MCF 10A (cell line): ENCODE measurements at regions of chr9 and their contacts with region 1.

Region 1: DNA sequence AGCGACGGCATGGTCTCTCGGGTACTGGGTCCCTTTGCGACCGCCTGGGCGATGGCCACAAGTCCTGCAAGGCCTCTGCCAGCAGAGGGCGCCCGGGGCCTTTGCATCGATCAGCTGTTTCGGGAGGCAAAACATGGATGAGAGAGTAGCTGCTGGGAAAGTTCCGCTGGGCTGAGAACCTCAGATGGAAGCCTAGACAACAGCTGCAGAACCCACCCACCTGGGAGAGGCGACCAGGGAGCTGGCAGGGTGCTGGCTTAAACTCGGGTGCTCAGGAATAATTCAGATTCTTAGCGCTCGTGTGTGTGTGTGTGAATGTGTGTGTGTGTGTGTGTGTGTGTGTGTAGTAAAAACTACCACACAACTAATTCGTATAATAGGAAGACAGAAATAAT is 50.0 kb downstream of the TRIM32 start:
- DNase-seq: peak; percentile 85
- H3K4me3 Mint-ChIP-seq: peak overlapping the region; percentile 2
- H3K27ac Mint-ChIP-seq: peak overlapping the region; percentile 0
- H3K4me1 Mint-ChIP-seq: peaks cover 9% of the 10 kb centered on the region
- H3K27me3 Mint-ChIP-seq: no peaks in the 10 kb centered on the region
- CTCF ChIP-seq: peak; percentile 96

Region 2: DNA sequence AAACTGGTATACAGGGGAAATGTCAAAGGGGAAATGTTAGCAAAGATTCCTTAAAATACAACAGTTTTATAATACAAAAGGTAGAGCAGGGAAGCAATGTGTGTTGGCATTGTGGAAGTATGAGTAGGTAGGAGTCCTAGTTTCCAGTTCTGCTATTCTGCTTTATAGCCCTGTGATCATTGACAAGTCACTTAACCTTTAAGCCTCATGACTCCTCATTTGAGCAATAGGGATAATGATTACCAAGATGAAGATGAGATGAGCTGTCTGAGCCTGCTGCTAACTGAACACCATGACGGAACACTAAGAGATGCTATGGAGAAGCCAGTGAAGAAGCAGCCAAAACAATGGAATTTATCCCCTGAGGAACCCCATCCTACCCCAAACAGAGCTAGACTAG is 331.8 kb before region 1 on chr9:
- CTCF ChIA-PET with region 1: no interaction called
- POLR2A ChIA-PET with region 1: no interaction called
- intact Hi-C with region 1: no loop called
- DNase-seq: no peak
- H3K4me3 Mint-ChIP-seq: no peak overlapping the region
- H3K27ac Mint-ChIP-seq: no peak overlapping the region
- H3K4me1 Mint-ChIP-seq: no peaks in the 10 kb centered on the region
- H3K27me3 Mint-ChIP-seq: no peaks in the 10 kb centered on the region
- CTCF ChIP-seq: no peak

Region 3: GRCh38 chr9:116724123-116724522 is 13.0 kb before region 1 on chr9:
- CTCF ChIA-PET with region 1: interaction called, 46 read pairs
- POLR2A ChIA-PET with region 1: no interaction called
- intact Hi-C with region 1: no loop called
- DNase-seq: no peak
- H3K4me3 Mint-ChIP-seq: no peak overlapping the region
- H3K27ac Mint-ChIP-seq: no peak overlapping the region
- H3K4me1 Mint-ChIP-seq: no peaks in the 10 kb centered on the region
- H3K27me3 Mint-ChIP-seq: peaks cover 4% of the 10 kb centered on the region
- CTCF ChIP-seq: no peak

Region 4: GRCh38 chr9:116757030-116757429 is 19.9 kb after region 1 on chr9:
- CTCF ChIA-PET with region 1: interaction called, 12 read pairs
- POLR2A ChIA-PET with region 1: no interaction called
- intact Hi-C with region 1: no loop called
- DNase-seq: peak; percentile 7
- H3K4me3 Mint-ChIP-seq: no peak overlapping the region
- H3K27ac Mint-ChIP-seq: no peak overlapping the region
- H3K4me1 Mint-ChIP-seq: peaks cover 9% of the 10 kb centered on the region
- H3K27me3 Mint-ChIP-seq: no peaks in the 10 kb centered on the region
- CTCF ChIP-seq: no peak

Region 5: GRCh38 chr9:116795821-116796220 is 58.7 kb after region 1 on chr9:
- CTCF ChIA-PET with region 1: interaction called, 10 read pairs
- POLR2A ChIA-PET with region 1: no interaction called
- intact Hi-C with region 1: no loop called
- DNase-seq: no peak
- H3K4me3 Mint-ChIP-seq: no peak overlapping the region
- H3K27ac Mint-ChIP-seq: no peak overlapping the region
- H3K4me1 Mint-ChIP-seq: peaks cover 2% of the 10 kb centered on the region
- H3K27me3 Mint-ChIP-seq: no peaks in the 10 kb centered on the region
- CTCF ChIP-seq: no peak

Region 6: DNA sequence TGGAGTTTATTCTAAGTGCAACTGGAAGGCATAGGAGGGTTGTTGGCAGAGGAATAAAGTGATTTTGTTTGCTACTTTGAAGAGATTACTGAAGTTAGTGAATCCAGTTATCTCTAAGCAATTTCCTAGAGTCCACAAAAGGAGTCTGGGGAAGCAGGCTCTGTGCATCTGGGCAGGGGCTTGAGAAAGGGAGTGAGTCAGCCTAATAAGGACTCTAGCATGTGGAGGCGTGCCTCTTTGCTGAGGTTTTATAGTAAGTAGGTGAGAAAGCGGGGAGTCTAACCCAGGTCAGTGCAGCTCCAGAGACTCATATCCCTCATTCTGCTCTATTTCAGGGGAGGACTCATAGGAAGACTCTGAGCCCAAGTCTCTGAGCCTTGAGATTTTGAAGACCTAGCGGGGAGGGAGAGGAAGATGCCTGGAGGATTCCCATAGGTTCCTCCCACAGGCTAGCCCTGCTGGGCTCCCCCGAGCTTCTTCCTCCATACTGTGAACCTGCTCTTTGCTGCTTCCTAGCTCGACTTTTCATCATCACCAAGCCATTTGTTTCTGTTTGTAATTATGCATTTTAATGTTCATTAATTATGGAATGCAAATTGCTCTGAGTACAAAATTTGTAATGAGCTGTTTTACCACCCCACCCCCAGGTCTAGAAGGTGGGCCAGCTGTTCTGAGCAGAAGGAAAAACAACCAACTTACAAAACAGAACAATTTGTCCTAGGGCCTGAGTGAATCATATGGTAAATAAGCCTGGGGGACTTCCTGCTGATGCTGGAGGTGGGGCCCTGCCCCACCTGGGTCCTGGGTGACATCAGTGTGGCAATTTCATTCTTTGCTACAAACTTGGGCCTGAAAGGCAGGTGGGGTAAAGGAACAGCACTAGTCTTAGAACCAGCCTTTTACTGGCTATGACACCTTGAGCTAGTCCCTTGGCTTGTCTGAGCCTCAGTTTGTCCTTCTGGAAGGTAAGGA is 100.2 kb after region 1 on chr9:
- CTCF ChIA-PET with region 1: interaction called, 38 read pairs
- POLR2A ChIA-PET with region 1: interaction called, 12 read pairs
- intact Hi-C with region 1: no loop called
- DNase-seq: peak; percentile 91
- H3K4me3 Mint-ChIP-seq: peak overlapping the region; percentile 75
- H3K27ac Mint-ChIP-seq: peak overlapping the region; percentile 98
- H3K4me1 Mint-ChIP-seq: peaks cover 27% of the 10 kb centered on the region
- H3K27me3 Mint-ChIP-seq: no peaks in the 10 kb centered on the region
- CTCF ChIP-seq: no peak

Region 7: DNA sequence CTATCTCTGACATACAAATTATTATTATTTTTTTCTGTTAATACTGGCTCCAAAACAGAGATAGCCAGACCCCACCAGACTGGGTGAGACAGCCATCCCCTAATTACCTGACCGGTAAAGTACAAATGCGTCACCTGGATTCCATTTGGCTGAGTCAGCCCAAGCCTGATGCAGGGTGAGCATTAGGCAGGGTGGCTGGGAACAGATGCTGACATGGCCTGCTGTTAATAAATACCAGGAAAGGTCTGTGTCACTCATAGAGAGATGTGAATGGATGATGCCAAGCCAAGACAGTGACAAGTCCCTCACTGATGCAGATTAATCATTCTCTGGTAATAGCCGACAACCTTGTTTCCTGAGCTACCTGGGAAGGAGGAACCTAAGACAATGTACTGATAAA is 133.4 kb after region 1 on chr9:
- CTCF ChIA-PET with region 1: interaction called, 483 read pairs
- POLR2A ChIA-PET with region 1: no interaction called
- intact Hi-C with region 1: no loop called
- DNase-seq: peak; percentile 71
- H3K4me3 Mint-ChIP-seq: no peak overlapping the region
- H3K27ac Mint-ChIP-seq: peak overlapping the region; percentile 41
- H3K4me1 Mint-ChIP-seq: peaks cover 7% of the 10 kb centered on the region
- H3K27me3 Mint-ChIP-seq: no peaks in the 10 kb centered on the region
- CTCF ChIP-seq: no peak

Region 8: DNA sequence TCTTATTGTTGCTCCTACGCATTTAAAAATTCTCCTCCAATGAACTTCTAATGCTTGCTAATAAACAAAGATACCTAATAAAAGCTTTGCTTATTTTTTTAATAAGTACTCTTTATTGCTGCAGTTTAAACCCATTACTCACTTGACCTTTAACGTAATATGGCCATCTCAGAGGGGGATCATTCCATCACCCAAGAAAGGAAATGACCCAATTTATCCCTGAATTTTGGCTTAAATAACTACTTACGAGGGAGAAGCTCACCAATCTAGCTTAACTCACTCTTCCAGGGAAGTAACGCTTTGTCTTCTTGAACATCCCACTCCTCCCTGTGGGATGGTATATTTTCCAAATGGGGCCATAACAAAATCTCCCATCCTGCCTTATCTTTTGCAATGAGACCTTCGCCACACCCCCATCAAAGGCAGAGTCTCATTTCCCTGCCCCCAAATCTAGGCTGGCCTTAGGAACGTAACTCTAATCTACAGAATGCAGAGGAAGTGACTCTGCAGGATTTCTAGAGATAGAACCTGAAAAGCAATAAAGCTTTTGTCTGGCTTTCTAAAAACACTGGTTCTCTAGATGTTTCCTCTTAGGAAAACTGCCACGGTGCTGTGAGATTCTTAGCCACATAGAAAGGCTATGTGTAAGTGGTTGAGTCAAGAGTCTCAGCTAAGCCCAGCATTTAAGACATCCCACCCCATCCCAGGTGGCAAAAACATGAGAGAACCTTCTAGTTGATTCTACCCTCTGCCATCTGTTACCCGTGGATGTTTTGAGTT is 367.8 kb after region 1 on chr9:
- CTCF ChIA-PET with region 1: interaction called, 10 read pairs
- POLR2A ChIA-PET with region 1: no interaction called
- intact Hi-C with region 1: no loop called
- DNase-seq: no peak
- H3K4me3 Mint-ChIP-seq: no peak overlapping the region
- H3K27ac Mint-ChIP-seq: no peak overlapping the region
- H3K4me1 Mint-ChIP-seq: peaks cover 5% of the 10 kb centered on the region
- H3K27me3 Mint-ChIP-seq: no peaks in the 10 kb centered on the region
- CTCF ChIP-seq: no peak

Region 9: DNA sequence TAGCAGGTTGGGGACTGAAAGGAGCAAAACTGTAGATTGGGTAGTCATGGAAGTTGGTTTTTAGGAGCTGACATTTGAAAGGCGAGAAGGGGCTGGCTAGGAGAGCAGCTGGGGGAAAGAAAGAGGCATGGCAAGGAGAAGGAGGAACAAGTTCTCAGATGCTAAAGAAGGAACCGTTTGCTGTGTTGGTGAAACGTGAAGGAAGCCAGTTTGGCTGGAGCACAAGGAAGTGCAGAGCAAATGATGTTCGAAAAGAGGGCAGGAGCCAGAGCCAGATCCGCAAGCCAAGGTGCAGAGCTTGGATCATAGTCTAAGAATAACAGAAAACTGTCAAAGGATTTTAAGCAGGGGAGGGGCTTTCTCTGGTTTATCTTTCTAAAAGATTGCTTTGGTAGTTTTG is 401.1 kb after region 1 on chr9:
- CTCF ChIA-PET with region 1: no interaction called
- POLR2A ChIA-PET with region 1: no interaction called
- intact Hi-C with region 1: no loop called
- DNase-seq: no peak
- H3K4me3 Mint-ChIP-seq: no peak overlapping the region
- H3K27ac Mint-ChIP-seq: no peak overlapping the region
- H3K4me1 Mint-ChIP-seq: no peaks in the 10 kb centered on the region
- H3K27me3 Mint-ChIP-seq: no peaks in the 10 kb centered on the region
- CTCF ChIP-seq: no peak